Activated naive CD8-positive, alpha-beta T cell treated with anti-CD3 and anti-CD28 coated beads, Interleukin-2, amount 10 ng/mL, durations not matched to agents 7 days and 5 days (primary cell): ENCODE measurements at regions of chr9 and their contacts with region 1.

Region 1: DNA sequence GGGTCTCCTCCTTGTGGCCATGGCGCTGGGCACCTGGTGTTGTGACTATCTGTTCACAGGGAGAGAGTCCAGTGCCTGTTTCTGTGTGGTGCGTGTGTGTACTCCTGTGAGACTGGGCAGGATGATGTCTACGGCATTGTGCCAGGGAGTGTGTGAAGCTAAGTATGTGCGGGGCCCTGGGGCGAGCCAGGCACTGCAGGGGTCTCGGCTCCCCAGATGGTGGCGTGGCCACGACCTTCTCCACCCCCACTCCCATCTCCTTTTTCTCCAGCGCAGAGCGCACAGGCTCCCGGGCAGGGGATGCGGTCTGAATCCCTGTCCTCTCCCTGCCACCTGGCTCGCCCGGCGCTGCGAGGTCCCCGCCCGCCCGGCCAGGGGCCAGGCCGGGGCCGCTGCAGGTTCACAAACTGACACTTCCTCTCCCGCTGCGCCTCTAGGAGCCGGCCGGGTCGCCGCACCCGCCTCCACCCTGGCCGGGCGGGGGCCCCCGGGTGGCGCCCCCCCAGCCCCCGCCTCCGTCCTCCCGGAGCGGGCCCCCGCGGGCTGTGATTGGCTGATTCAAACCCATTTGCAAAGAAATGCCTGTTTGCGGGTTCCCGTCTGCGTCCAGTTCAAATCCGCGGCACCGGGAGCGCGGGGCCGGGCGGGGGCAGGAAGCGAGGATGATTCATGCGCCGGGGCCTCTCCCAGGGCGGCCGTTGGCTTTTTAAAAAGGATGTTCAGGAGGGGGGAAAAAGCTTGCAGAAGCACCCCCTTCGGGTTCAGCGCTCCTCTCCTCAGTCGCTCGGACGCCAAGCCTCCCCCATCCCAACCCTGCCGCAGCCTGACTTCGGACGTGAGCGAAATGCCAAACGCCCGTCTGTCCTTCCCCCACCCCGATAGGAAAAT is 790 bp downstream of the PHF19 start:
- DNase-seq: peak; percentile 91
- ATAC-seq: peak; percentile 58
- H3K4me3 Mint-ChIP-seq: peak overlapping the region; percentile 91
- H3K27ac Mint-ChIP-seq: peak overlapping the region; percentile 89
- H3K4me1 Mint-ChIP-seq: peaks cover 72% of the 10 kb centered on the region
- H3K27me3 Mint-ChIP-seq: no peaks in the 10 kb centered on the region

Region 2: DNA sequence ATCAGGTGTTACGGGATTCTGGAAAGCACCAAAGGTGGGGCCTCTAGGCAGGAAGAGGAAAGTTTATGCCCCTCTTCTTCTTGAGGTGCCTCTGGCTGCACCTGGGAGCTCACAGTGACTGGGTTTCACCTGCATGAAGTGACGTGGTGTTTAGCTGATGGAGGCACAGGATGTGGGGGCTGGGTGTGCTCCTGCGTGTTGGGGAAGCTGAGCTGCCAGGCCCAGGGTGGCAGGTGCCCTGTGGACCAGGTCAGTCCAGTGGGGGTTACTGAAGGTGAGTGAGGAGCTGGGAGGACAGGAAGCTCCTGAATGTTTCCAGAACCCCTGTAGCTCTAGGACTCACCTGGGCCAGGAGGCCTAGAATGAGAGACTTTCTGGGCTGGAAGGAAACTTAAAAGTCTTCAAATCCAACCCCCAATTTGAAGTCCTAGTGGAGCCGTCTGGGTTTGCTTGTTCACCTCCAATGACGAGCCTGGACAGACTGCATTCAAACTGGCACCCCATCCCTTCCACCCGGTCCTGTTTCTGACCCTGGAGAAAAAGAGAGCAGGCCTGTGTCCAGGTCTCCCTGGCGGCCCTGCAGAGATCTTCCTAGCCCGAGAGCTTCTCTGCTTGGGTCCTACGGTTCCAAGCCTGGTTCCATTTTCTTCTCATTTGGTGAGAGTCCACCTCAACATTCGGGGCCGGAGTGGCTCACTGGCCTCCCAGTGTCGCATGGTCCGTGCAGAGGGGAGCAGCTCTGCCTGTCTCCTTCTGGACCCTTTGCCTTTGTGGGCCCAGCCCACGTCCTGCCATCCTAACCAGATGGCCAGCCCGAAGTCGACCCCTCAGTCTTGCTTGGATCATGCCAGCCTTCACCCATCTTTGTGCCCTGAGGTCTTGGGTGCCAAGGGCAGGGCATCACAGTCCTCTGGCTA is 28.1 kb after region 1 on chr9:
- POLR2A ChIA-PET with region 1: interaction called, 20 read pairs
- DNase-seq: peak; percentile 62
- ATAC-seq: peak; percentile 57
- H3K4me3 Mint-ChIP-seq: peak overlapping the region; percentile 62
- H3K27ac Mint-ChIP-seq: peak overlapping the region; percentile 93
- H3K4me1 Mint-ChIP-seq: peaks cover 77% of the 10 kb centered on the region
- H3K27me3 Mint-ChIP-seq: no peaks in the 10 kb centered on the region

Region 3: GRCh38 chr9:120936011-120936763 is 60.0 kb after region 1 on chr9:
- POLR2A ChIA-PET with region 1: interaction called, 54 read pairs
- DNase-seq: peak; percentile 88
- ATAC-seq: peak; percentile 70
- H3K4me3 Mint-ChIP-seq: peak overlapping the region; percentile 53
- H3K27ac Mint-ChIP-seq: peak overlapping the region; percentile 81
- H3K4me1 Mint-ChIP-seq: peaks cover 55% of the 10 kb centered on the region
- H3K27me3 Mint-ChIP-seq: no peaks in the 10 kb centered on the region

Region 4: DNA sequence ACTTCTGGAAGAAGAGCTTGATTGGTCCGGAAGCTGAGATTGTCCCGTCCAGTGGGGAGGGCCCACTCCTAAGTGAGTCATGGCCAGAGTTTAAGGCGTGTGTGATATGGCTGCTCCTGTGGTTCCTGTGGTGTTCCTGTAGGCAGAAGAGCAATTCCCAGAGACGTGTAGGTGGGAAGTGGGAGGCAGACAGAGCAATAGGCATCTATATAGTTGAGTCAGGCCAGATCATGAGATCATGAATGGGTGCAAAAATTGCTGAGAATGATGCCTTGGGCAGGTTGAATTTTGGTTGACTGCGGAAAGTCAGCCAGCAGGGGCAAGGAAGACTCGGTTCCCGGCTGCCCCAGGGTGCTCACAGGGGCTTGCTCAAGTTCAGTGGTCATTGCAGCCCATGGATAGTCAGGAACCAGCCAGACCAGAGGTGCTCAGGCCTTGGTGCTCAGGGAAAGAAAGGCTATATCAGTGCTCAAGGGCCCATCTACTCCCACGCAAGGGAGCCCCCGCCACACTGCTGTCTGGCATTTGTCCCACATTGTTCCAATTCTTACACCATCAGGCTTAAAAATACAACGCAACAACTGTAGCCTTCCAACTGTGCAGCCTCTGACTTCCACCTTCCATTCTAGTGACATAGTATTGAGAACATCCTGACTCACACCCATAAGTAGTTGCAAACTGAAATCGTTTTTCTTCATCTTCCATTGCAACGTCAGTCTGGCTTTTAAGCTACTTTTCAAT is 370.8 kb after region 1 on chr9:
- POLR2A ChIA-PET with region 1: no interaction called
- DNase-seq: no peak
- ATAC-seq: no peak
- H3K4me3 Mint-ChIP-seq: no peak overlapping the region
- H3K27ac Mint-ChIP-seq: no peak overlapping the region
- H3K4me1 Mint-ChIP-seq: peaks cover 1% of the 10 kb centered on the region
- H3K27me3 Mint-ChIP-seq: no peaks in the 10 kb centered on the region